Naive thymus-derived CD4-positive, alpha-beta T cell (primary cell): ENCODE measurements at regions of chr6 and their contacts with region 1.

Region 1: GRCh38 chr6:35468181-35468979 is at the start of gene RPL10A:
- DNase-seq: peak; percentile 87 to 97 (median 94)
- ATAC-seq: peak; percentile 96
- H3K4me3 ChIP-seq: peak within 1 kb of the TSS; percentile 91
- H3K4me3 Mint-ChIP-seq: peak within 1 kb of the TSS; percentile 85 to 99 (median 98)
- H3K27ac ChIP-seq: peak within 1 kb of the TSS; percentile 83
- H3K27ac Mint-ChIP-seq: peak within 1 kb of the TSS; percentile 94 to 100 (median 99)
- H3K4me1 ChIP-seq: peaks cover 11 to 27% of the 10 kb centered on the region in 2 donors
- H3K4me1 Mint-ChIP-seq: peaks cover 25 to 49% (median 35%) of the 10 kb centered on the region in 7 donors
- H3K27me3 ChIP-seq: no peaks in the 10 kb centered on the region
- H3K27me3 Mint-ChIP-seq: no peaks in the 10 kb centered on the region
- total RNA-seq, gene RPL10A: 1,380 to 2,381 (median 2,302) TPM

Region 2: GRCh38 chr6:34696739-34697543 is 771.4 kb before region 1 on chr6 and contains the start of gene ILRUN:
- CTCF ChIA-PET with region 1: no interaction called
- POLR2A ChIA-PET with region 1: no interaction called
- intact Hi-C with region 1: loop called in 1 of 2 experiments (anchors 5 kb)
- DNase-seq: peak; percentile 88 to 97 (median 93)
- ATAC-seq: peak; percentile 96
- H3K4me3 ChIP-seq: peak within 1 kb of the TSS; percentile 88
- H3K4me3 Mint-ChIP-seq: peak within 1 kb of the TSS; percentile 95 to 99 (median 98)
- H3K27ac ChIP-seq: peak within 1 kb of the TSS; percentile 94
- H3K27ac Mint-ChIP-seq: peak within 1 kb of the TSS; percentile 88 to 100 (median 99)
- H3K4me1 ChIP-seq: peaks cover 17 to 20% of the 10 kb centered on the region in 2 donors
- H3K4me1 Mint-ChIP-seq: peaks cover 30 to 60% (median 51%) of the 10 kb centered on the region in 7 donors
- H3K27me3 ChIP-seq: no peaks in the 10 kb centered on the region
- H3K27me3 Mint-ChIP-seq: peaks cover 0 to 4% (median 0%) of the 10 kb centered on the region in 5 donors
- total RNA-seq, gene ILRUN: 45.2 to 74.6 (median 53.7) TPM

Region 3: GRCh38 chr6:35259194-35259947 is 209.0 kb before region 1 on chr6 and contains the start of gene ZNF76:
- CTCF ChIA-PET with region 1: no interaction called
- POLR2A ChIA-PET with region 1: no interaction called
- intact Hi-C with region 1: loop called in 1 of 2 experiments (anchors 1 kb)
- DNase-seq: peak; percentile 89 to 93 (median 92)
- ATAC-seq: peak; percentile 88
- H3K4me3 ChIP-seq: peak within 1 kb of the TSS; percentile 65
- H3K4me3 Mint-ChIP-seq: peak within 1 kb of the TSS; percentile 85 to 99 (median 97)
- H3K27ac ChIP-seq: peak within 1 kb of the TSS; percentile 95
- H3K27ac Mint-ChIP-seq: peak within 1 kb of the TSS; percentile 89 to 99 (median 97)
- H3K4me1 ChIP-seq: peaks cover 15 to 17% of the 10 kb centered on the region in 2 donors
- H3K4me1 Mint-ChIP-seq: peaks cover 37 to 64% (median 50%) of the 10 kb centered on the region in 7 donors
- H3K27me3 ChIP-seq: no peaks in the 10 kb centered on the region
- H3K27me3 Mint-ChIP-seq: no peaks in the 10 kb centered on the region
- total RNA-seq, gene ZNF76: 44.4 to 110 (median 77.2) TPM

Region 4: DNA sequence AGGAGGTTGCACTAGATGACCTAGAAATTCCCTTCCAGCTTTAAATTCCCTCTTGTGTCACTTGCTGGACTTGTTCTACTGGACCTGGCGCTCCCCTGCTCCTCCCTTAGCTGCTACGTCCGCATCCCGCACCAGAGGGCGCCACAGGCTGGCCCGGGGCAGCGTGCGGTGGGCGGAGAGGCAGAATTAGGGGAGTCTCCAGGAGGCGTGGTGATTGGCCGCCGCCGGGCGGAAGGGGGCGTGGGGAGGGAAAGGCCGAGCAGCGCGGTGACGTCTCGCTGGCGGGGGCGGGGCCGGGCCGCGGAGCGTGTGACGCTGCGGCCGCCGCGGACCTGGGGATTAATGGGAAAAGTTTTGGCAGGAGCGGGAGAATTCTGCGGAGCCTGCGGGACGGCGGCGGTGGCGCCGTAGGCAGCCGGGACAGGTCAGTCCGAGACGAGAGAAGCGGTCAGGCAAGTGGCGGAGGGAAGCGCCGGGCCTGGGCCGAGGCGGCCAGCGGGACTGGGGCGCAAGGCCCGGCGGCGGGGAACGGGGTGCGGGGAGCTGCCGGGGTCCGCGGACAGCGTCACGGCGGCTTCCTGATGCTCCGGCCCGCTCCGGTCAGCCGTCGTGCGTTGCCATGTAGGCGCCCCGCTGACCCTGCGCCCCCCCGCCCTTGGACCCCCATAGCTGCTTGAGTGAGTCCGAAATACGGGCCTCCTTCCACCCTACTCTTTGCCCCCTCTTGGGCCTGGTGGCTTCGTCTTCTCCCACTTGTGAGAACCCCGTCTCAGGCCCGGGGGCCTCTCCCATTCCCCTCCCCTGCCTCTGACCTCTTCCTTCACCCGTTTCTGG is 125.9 kb before region 1 on chr6 and contains the start of gene PPARD:
- CTCF ChIA-PET with region 1: interaction called, 9 read pairs
- POLR2A ChIA-PET with region 1: interaction called, 31 read pairs
- intact Hi-C with region 1: loop called (anchors 1 kb)
- DNase-seq: peak; percentile 92 to 100 (median 96)
- ATAC-seq: peak; percentile 100
- H3K4me3 ChIP-seq: peak within 1 kb of the TSS; percentile 70
- H3K4me3 Mint-ChIP-seq: peak within 1 kb of the TSS; percentile 88 to 100 (median 98)
- H3K27ac ChIP-seq: peak within 1 kb of the TSS; percentile 97
- H3K27ac Mint-ChIP-seq: peak within 1 kb of the TSS; percentile 88 to 98 (median 97)
- H3K4me1 ChIP-seq: peaks cover 19 to 35% of the 10 kb centered on the region in 2 donors
- H3K4me1 Mint-ChIP-seq: peaks cover 38 to 55% (median 49%) of the 10 kb centered on the region in 7 donors
- H3K27me3 ChIP-seq: no peaks in the 10 kb centered on the region
- H3K27me3 Mint-ChIP-seq: peaks cover 0 to 3% (median 0%) of the 10 kb centered on the region in 5 donors
- total RNA-seq, gene PPARD: 29.3 to 47.1 (median 36.0) TPM

Region 5: GRCh38 chr6:35415065-35415991 is 53.1 kb before region 1 on chr6:
- CTCF ChIA-PET with region 1: interaction called, 5 read pairs
- POLR2A ChIA-PET with region 1: interaction called, 6 read pairs
- intact Hi-C with region 1: loop called in 1 of 2 experiments (anchors 1 kb)
- DNase-seq: peak in 3 of 9 donors; percentile 23 to 26 (median 25)
- ATAC-seq: peak; percentile 53
- H3K4me3 ChIP-seq: no peak overlapping the region
- H3K4me3 Mint-ChIP-seq: peak overlapping the region in 2 of 10 donors; percentile 37 to 40
- H3K27ac ChIP-seq: no peak overlapping the region
- H3K27ac Mint-ChIP-seq: peak overlapping the region; percentile 5 to 84 (median 71)
- H3K4me1 ChIP-seq: peaks cover 0 to 44% of the 10 kb centered on the region in 2 donors
- H3K4me1 Mint-ChIP-seq: peaks cover 33 to 73% (median 67%) of the 10 kb centered on the region in 7 donors
- H3K27me3 ChIP-seq: no peaks in the 10 kb centered on the region
- H3K27me3 Mint-ChIP-seq: no peaks in the 10 kb centered on the region

Region 6: GRCh38 chr6:35496841-35497570 is 28.6 kb after region 1 on chr6 and contains the start of gene TEAD3:
- CTCF ChIA-PET with region 1: no interaction called
- POLR2A ChIA-PET with region 1: no interaction called
- intact Hi-C with region 1: loop called (anchors 2 kb)
- DNase-seq: peak; percentile 25 to 78 (median 49)
- ATAC-seq: peak; percentile 75
- H3K4me3 ChIP-seq: peak within 1 kb of the TSS; percentile 68
- H3K4me3 Mint-ChIP-seq: peak within 1 kb of the TSS; percentile 67 to 87 (median 82)
- H3K27ac ChIP-seq: peak within 1 kb of the TSS; percentile 60
- H3K27ac Mint-ChIP-seq: peak within 1 kb of the TSS in 2 of 9 donors; percentile 47 to 52
- H3K4me1 ChIP-seq: peaks cover 0 to 10% of the 10 kb centered on the region in 2 donors
- H3K4me1 Mint-ChIP-seq: peaks cover 13 to 27% (median 18%) of the 10 kb centered on the region in 7 donors
- H3K27me3 ChIP-seq: peaks cover 0 to 4% of the 10 kb centered on the region in 2 donors
- H3K27me3 Mint-ChIP-seq: peaks cover 0 to 61% (median 10%) of the 10 kb centered on the region in 5 donors
- total RNA-seq, gene TEAD3: 0.16 to 0.27 (median 0.24) TPM in 3 of 5 experiments, not detected in the others

Region 7: GRCh38 chr6:35669451-35670045 is 201.2 kb after region 1 on chr6:
- CTCF ChIA-PET with region 1: no interaction called
- POLR2A ChIA-PET with region 1: interaction called, 3 read pairs
- intact Hi-C with region 1: loop called in 1 of 2 experiments (anchors 5 kb)
- DNase-seq: peak in 4 of 9 donors; percentile 29 to 57 (median 38)
- ATAC-seq: peak; percentile 78
- H3K4me3 ChIP-seq: peak overlapping the region; percentile 43
- H3K4me3 Mint-ChIP-seq: peak overlapping the region in 9 of 10 donors; percentile 56 to 88 (median 81)
- H3K27ac ChIP-seq: peak overlapping the region; percentile 79
- H3K27ac Mint-ChIP-seq: peak overlapping the region in 7 of 9 donors; percentile 84 to 98 (median 93)
- H3K4me1 ChIP-seq: peaks cover 33 to 48% of the 10 kb centered on the region in 2 donors
- H3K4me1 Mint-ChIP-seq: peaks cover 32 to 63% (median 48%) of the 10 kb centered on the region in 7 donors
- H3K27me3 ChIP-seq: no peaks in the 10 kb centered on the region
- H3K27me3 Mint-ChIP-seq: no peaks in the 10 kb centered on the region